ENCODE measurements at regions of chr14 and their contacts with region 1.

Region 1: GRCh38 chr14:96424109-96424989 is 32.4 kb downstream of the AK7 start:
- DNase-seq: peak in 1 of 2 donors; percentile 76
- ATAC-seq: peak; percentile 84
- H3K4me3 ChIP-seq: peak overlapping the region in 1 of 2 donors; percentile 64
- H3K27ac ChIP-seq: no peak overlapping the region
- H3K4me1 ChIP-seq: no peaks in the 10 kb centered on the region
- H3K27me3 ChIP-seq: peaks cover 0 to 1% of the 10 kb centered on the region in 2 donors

Region 2: DNA sequence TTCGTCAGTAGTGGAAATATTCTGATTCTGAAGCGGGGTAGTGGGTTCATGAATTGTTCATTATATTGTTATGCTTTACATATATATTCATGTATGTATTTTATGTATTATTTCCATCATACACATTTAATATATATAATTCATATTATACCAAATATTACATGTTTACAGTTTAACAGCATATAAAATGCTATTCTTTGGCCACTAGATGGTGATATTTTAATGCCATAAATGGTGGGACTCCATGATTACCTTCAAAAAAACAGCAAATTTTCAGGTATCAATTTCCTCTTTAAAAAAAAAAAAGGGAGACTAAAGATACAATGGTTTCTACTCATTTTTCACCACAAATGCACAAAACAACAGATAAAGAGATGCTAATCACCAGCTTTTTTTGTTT is 127.3 kb before region 1 on chr14:
- intact Hi-C with region 1: loop called (anchors 5 kb)
- DNase-seq: no peak
- ATAC-seq: no peak
- H3K4me3 ChIP-seq: no peak overlapping the region
- H3K27ac ChIP-seq: no peak overlapping the region
- H3K4me1 ChIP-seq: no peaks in the 10 kb centered on the region
- H3K27me3 ChIP-seq: no peaks in the 10 kb centered on the region